CD8-positive, alpha-beta memory T cell (primary cell): ENCODE measurements at regions of chr5 and their contacts with region 1.

Region 1: GRCh38 chr5:33936004-33936380 is 194 bp upstream of the RXFP3 start:
- DNase-seq: peak in 3 of 5 donors; percentile 3 to 33 (median 4)
- H3K4me3 ChIP-seq: no peak overlapping the region
- H3K4me3 Mint-ChIP-seq: no peak overlapping the region
- H3K27ac ChIP-seq: no peak overlapping the region
- H3K27ac Mint-ChIP-seq: no peak overlapping the region
- H3K4me1 ChIP-seq: no peaks in the 10 kb centered on the region
- H3K4me1 Mint-ChIP-seq: peaks cover 0 to 5% (median 0%) of the 10 kb centered on the region in 3 donors
- H3K27me3 ChIP-seq: peaks cover 26% of the 10 kb centered on the region
- H3K27me3 Mint-ChIP-seq: peaks cover 14 to 58% of the 10 kb centered on the region in 2 donors

Region 2: DNA sequence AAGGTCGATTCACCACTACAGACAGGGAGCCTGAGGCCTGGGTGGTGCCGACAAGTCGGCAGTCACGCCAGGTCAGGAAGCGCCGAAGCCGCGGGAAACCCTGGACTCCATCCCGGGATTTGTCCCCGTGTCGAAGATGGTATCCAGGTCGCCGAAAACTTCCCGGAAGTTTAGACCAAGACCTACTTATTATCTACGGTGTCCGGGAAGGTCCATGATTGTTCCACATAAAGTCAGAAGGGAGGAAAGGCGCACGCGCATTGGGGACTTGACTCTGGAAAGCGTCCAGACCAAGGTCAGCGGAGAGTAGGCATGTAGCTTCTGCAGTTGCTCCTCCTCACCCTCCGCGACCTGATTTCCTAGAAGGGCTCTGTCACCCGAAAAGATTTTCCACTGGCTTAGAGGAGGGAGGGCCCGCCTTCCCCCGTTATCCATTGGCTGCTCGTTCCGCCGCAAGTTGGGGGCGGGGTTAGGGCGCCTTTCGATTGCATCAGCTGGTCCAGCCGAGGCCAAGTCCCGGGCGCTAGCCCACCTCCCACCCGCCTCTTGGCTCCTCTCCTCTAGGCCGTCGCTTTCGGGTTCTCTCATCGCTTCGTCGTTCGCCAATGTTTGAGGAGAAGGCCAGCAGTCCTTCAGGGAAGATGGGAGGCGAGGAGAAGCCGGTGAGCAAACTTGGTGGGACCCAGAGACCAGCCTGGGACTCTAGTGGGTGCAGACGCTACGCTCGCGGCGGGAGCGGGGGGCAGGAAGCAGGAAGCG is 495.3 kb before region 1 on chr5 and contains the start of gene TARS1:
- CTCF ChIA-PET with region 1: interaction called, 20 read pairs
- POLR2A ChIA-PET with region 1: no interaction called
- DNase-seq: peak; percentile 90 to 94 (median 92)
- H3K4me3 ChIP-seq: peak within 1 kb of the TSS; percentile 82
- H3K4me3 Mint-ChIP-seq: no peak within 1 kb of the TSS
- H3K27ac ChIP-seq: peak within 1 kb of the TSS; percentile 92
- H3K27ac Mint-ChIP-seq: no peak within 1 kb of the TSS
- H3K4me1 ChIP-seq: peaks cover 24% of the 10 kb centered on the region
- H3K4me1 Mint-ChIP-seq: peaks cover 27 to 33% (median 28%) of the 10 kb centered on the region in 3 donors
- H3K27me3 ChIP-seq: no peaks in the 10 kb centered on the region
- H3K27me3 Mint-ChIP-seq: no peaks in the 10 kb centered on the region
- total RNA-seq, gene TARS1: 234 to 236 TPM

Region 3: GRCh38 chr5:33588654-33589372 is 347.2 kb before region 1 on chr5:
- CTCF ChIA-PET with region 1: interaction called, 16 read pairs
- POLR2A ChIA-PET with region 1: no interaction called
- DNase-seq: peak in 3 of 5 donors; percentile 3 to 47 (median 19)
- H3K4me3 ChIP-seq: no peak overlapping the region
- H3K4me3 Mint-ChIP-seq: no peak overlapping the region
- H3K27ac ChIP-seq: no peak overlapping the region
- H3K27ac Mint-ChIP-seq: peak overlapping the region in 1 of 8 donors; percentile 22
- H3K4me1 ChIP-seq: no peaks in the 10 kb centered on the region
- H3K4me1 Mint-ChIP-seq: no peaks in the 10 kb centered on the region
- H3K27me3 ChIP-seq: no peaks in the 10 kb centered on the region
- H3K27me3 Mint-ChIP-seq: peaks cover 4% of the 10 kb centered on the region in 2 donors